ENCODE measurements at regions of chr4 and their contacts with region 1.

Region 1: GRCh38 chr4:100525686-100526085 is 7.9 kb upstream of the EMCN start:
- DNase-seq: no peak
- ATAC-seq: no peak
- H3K4me3 ChIP-seq: no peak overlapping the region
- H3K4me3 Mint-ChIP-seq: no peak overlapping the region
- H3K27ac ChIP-seq: no peak overlapping the region
- H3K27ac Mint-ChIP-seq: no peak overlapping the region
- H3K4me1 ChIP-seq: no peaks in the 10 kb centered on the region
- H3K4me1 Mint-ChIP-seq: peaks cover 5 to 10% (median 6%) of the 10 kb centered on the region in 3 donors
- H3K27me3 ChIP-seq: no peaks in the 10 kb centered on the region
- H3K27me3 Mint-ChIP-seq: peaks cover 2 to 6% of the 10 kb centered on the region in 2 donors

Region 2: GRCh38 chr4:100539706-100540105 is 14.0 kb after region 1 on chr4:
- CTCF ChIA-PET with region 1: no interaction called
- POLR2A ChIA-PET with region 1: no interaction called
- DNase-seq: peak in 1 of 35 experiments; percentile 14
- ATAC-seq: peak in 3 of 4 experiments; percentile 52 to 67 (median 53)
- H3K4me3 ChIP-seq: no peak overlapping the region
- H3K4me3 Mint-ChIP-seq: no peak overlapping the region
- H3K27ac ChIP-seq: no peak overlapping the region
- H3K27ac Mint-ChIP-seq: no peak overlapping the region
- H3K4me1 ChIP-seq: peaks cover 0 to 2% of the 10 kb centered on the region in 2 experiments
- H3K4me1 Mint-ChIP-seq: no peaks in the 10 kb centered on the region
- H3K27me3 ChIP-seq: no peaks in the 10 kb centered on the region
- H3K27me3 Mint-ChIP-seq: peaks cover 2 to 4% of the 10 kb centered on the region in 2 donors

Region 3: GRCh38 chr4:100555611-100556337 is 30.1 kb after region 1 on chr4:
- CTCF ChIA-PET with region 1: no interaction called
- POLR2A ChIA-PET with region 1: no interaction called
- DNase-seq: no peak
- ATAC-seq: no peak
- H3K4me3 ChIP-seq: no peak overlapping the region
- H3K4me3 Mint-ChIP-seq: no peak overlapping the region
- H3K27ac ChIP-seq: no peak overlapping the region
- H3K27ac Mint-ChIP-seq: no peak overlapping the region
- H3K4me1 ChIP-seq: no peaks in the 10 kb centered on the region
- H3K4me1 Mint-ChIP-seq: peaks cover 0 to 2% (median 0%) of the 10 kb centered on the region in 3 donors
- H3K27me3 ChIP-seq: no peaks in the 10 kb centered on the region
- H3K27me3 Mint-ChIP-seq: peaks cover 0 to 5% of the 10 kb centered on the region in 2 donors

Region 4: DNA sequence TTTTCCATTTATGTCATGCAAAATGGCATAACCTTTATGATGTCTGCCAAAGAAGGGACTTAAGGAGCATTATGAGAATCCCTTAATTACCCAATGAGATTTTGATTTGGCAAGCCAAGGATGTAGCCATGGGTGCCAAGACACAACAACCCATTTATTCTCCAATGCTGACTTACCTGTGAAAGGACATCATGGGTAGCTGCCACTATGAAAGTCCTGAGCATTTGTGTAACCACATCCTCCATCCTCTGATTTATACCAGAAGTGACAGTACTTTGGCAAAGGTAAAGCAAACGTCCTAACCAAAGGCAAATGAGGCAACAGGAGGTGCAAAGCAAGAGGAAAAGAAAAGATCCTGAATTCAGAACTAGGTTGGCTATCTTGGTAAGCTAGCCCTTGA is 79.5 kb after region 1 on chr4:
- CTCF ChIA-PET with region 1: no interaction called
- POLR2A ChIA-PET with region 1: interaction called in 1 of 2 experiments, 10 read pairs
- DNase-seq: no peak
- ATAC-seq: no peak
- H3K4me3 ChIP-seq: no peak overlapping the region
- H3K4me3 Mint-ChIP-seq: no peak overlapping the region
- H3K27ac ChIP-seq: no peak overlapping the region
- H3K27ac Mint-ChIP-seq: no peak overlapping the region
- H3K4me1 ChIP-seq: peaks cover 0 to 6% of the 10 kb centered on the region in 2 experiments
- H3K4me1 Mint-ChIP-seq: peaks cover 5 to 10% (median 7%) of the 10 kb centered on the region in 3 donors
- H3K27me3 ChIP-seq: no peaks in the 10 kb centered on the region
- H3K27me3 Mint-ChIP-seq: no peaks in the 10 kb centered on the region